PC-9 (cell line): ENCODE measurements at regions of chr20 and their contacts with region 1.

Region 1: GRCh38 chr20:49676581-49677291 is 36.9 kb downstream of the B4GALT5 start:
- DNase-seq: peak in 1 of 2 experiments; percentile 76
- H3K4me3 ChIP-seq: peak overlapping the region; percentile 11; the same call in 1 of the 2 replicates
- H3K27ac ChIP-seq: peak overlapping the region; percentile 91
- H3K4me1 ChIP-seq: peaks cover 100% of the 10 kb centered on the region
- H3K27me3 ChIP-seq: no peaks in the 10 kb centered on the region
- CTCF ChIP-seq: no peak

Region 2: GRCh38 chr20:48921151-48921898 is 755.4 kb before region 1 on chr20 and contains the start of gene ARFGEF2:
- CTCF ChIA-PET with region 1: no interaction called
- POLR2A ChIA-PET with region 1: interaction called, 36 read pairs
- intact Hi-C with region 1: no loop called
- DNase-seq: peak; percentile 82 to 97
- H3K4me3 ChIP-seq: peak within 1 kb of the TSS; percentile 65
- H3K27ac ChIP-seq: peak within 1 kb of the TSS; percentile 90
- H3K4me1 ChIP-seq: peaks cover 36% of the 10 kb centered on the region
- H3K27me3 ChIP-seq: no peaks in the 10 kb centered on the region
- CTCF ChIP-seq: peak; percentile 7; the same call in 1 of the 2 replicates
- total RNA-seq, gene ARFGEF2: 39.9 and 47.0 TPM in 2 replicates

Region 3: GRCh38 chr20:49699200-49699992 is 22.7 kb after region 1 on chr20:
- CTCF ChIA-PET with region 1: interaction called, 6 read pairs
- POLR2A ChIA-PET with region 1: interaction called, 9 read pairs
- intact Hi-C with region 1: loop called (anchors 2 kb)
- DNase-seq: peak in 1 of 2 experiments; percentile 81
- H3K4me3 ChIP-seq: peak overlapping the region; percentile 19; the same call in 1 of the 2 replicates
- H3K27ac ChIP-seq: peak overlapping the region; percentile 99
- H3K4me1 ChIP-seq: peaks cover 97% of the 10 kb centered on the region
- H3K27me3 ChIP-seq: no peaks in the 10 kb centered on the region
- CTCF ChIP-seq: no peak

Region 4: GRCh38 chr20:49713753-49714712 is 37.3 kb after region 1 on chr20 and contains the start of gene B4GALT5:
- CTCF ChIA-PET with region 1: interaction called, 3 read pairs
- POLR2A ChIA-PET with region 1: no interaction called
- intact Hi-C with region 1: loop called (anchors 1 kb)
- DNase-seq: peak in 1 of 2 experiments; percentile 80
- H3K4me3 ChIP-seq: peak within 1 kb of the TSS; percentile 86
- H3K27ac ChIP-seq: peak within 1 kb of the TSS; percentile 84
- H3K4me1 ChIP-seq: peaks cover 62% of the 10 kb centered on the region
- H3K27me3 ChIP-seq: no peaks in the 10 kb centered on the region
- CTCF ChIP-seq: no peak
- total RNA-seq, gene B4GALT5: 61.7 and 63.1 TPM in 2 replicates

Region 5: GRCh38 chr20:49729721-49730138 is 53.0 kb after region 1 on chr20:
- CTCF ChIA-PET with region 1: no interaction called
- POLR2A ChIA-PET with region 1: no interaction called
- intact Hi-C with region 1: no loop called
- DNase-seq: peak in 1 of 2 experiments; percentile 84
- H3K4me3 ChIP-seq: no peak overlapping the region
- H3K27ac ChIP-seq: peak overlapping the region; percentile 94
- H3K4me1 ChIP-seq: peaks cover 64% of the 10 kb centered on the region
- H3K27me3 ChIP-seq: no peaks in the 10 kb centered on the region
- CTCF ChIP-seq: no peak

Region 6: DNA sequence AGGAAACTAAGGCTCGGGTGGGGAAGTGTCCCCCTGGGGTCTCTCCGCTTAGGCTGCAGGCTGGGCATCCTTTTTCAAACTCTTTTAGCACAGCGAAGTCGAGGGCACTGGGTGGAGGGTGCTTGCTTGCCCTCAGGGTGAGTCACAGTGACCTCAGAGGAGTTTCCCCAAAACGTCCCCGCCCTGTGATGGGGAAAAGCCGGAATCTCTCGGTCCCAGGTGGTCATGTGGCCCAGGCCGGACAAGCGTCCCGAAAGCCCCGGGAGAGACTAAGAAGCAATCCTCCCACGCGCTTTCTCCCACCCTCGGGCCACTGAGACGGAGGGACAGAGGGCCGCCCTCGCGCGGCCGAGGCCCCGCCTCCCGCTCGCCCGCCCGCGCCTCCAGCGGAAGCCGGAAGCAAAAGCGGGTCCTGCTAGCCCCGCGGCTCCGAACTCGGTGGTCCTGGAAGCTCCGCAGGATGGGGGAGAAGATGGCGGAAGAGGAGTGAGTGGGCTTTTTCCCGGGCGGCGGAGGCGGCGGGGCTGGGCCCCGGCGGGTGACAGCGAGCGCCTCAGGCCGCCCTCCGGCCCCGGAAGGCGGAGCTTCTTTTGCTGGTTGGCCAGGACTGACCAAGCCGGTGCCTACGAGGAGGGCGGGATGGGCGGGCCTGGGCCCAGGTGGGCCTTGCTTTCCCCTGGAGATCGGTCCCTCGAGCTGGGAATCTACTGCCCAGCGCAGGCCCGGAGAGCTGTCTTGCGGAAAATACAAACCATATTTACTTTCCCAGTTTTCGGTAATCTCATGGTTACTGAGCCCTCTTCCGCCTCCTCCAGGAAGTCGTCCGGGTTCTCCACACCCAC is 135.9 kb after region 1 on chr20 and contains the start of gene SLC9A8:
- CTCF ChIA-PET with region 1: no interaction called
- POLR2A ChIA-PET with region 1: interaction called, 13 read pairs
- intact Hi-C with region 1: loop called (anchors 2 kb)
- DNase-seq: peak; percentile 94 to 97
- H3K4me3 ChIP-seq: peak within 1 kb of the TSS; percentile 87
- H3K27ac ChIP-seq: peak within 1 kb of the TSS; percentile 98
- H3K4me1 ChIP-seq: peaks cover 70% of the 10 kb centered on the region
- H3K27me3 ChIP-seq: no peaks in the 10 kb centered on the region
- CTCF ChIP-seq: no peak
- total RNA-seq, gene SLC9A8: 12.7 and 21.4 TPM in 2 replicates

Region 7: GRCh38 chr20:49846206-49846807 is 169.6 kb after region 1 on chr20:
- CTCF ChIA-PET with region 1: no interaction called
- POLR2A ChIA-PET with region 1: interaction called, 10 read pairs
- intact Hi-C with region 1: no loop called
- DNase-seq: peak; percentile 35 to 62
- H3K4me3 ChIP-seq: no peak overlapping the region
- H3K27ac ChIP-seq: peak overlapping the region; percentile 33
- H3K4me1 ChIP-seq: peaks cover 8% of the 10 kb centered on the region; the same call in 1 of the 2 replicates
- H3K27me3 ChIP-seq: no peaks in the 10 kb centered on the region
- CTCF ChIP-seq: peak; percentile 90